Naive thymus-derived CD4-positive, alpha-beta T cell (primary cell): ENCODE measurements at regions of chrX and their contacts with region 1.

Region 1: DNA sequence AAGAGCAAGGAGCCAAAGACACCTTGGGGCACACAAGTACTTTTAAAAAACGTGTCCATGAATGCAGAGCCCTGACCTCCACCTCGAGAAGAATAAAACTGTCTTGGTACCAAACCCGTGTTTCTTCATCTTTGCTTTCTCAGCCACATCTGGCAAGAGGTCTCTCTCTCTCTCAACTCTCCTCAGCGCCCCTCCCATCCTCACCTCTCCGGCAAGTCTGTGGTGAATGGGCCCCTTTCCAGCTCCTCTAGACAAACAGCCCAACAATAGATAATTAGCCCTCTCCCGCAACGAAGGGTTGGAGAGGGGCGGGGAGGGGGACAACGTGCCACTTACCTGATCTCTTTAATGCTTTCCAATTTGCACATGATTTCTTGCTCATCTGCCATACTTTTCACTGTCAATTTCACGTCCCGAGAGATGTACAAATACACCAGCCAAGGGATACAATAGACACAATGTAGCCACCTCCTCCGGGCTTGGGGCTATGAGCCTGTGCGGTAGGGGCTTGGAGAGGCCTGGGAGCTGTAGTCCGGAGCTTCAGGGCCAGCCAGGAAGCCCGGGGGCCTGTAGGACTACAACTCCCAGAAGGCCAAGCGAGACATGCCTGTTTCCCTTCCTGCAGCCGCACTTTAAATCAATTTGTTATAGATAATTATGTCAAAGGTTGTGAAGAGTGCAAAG is at the start of gene ZC4H2:
- DNase-seq: peak; percentile 17 to 73 (median 58)
- ATAC-seq: peak; percentile 96
- H3K4me3 ChIP-seq: peak within 1 kb of the TSS; percentile 62
- H3K4me3 Mint-ChIP-seq: peak within 1 kb of the TSS; percentile 87 to 99 (median 96)
- H3K27ac ChIP-seq: peak within 1 kb of the TSS; percentile 60
- H3K27ac Mint-ChIP-seq: peak within 1 kb of the TSS; percentile 58 to 92 (median 88)
- H3K4me1 ChIP-seq: peaks cover 3 to 11% of the 10 kb centered on the region in 2 donors
- H3K4me1 Mint-ChIP-seq: peaks cover 2 to 37% (median 28%) of the 10 kb centered on the region in 7 donors
- H3K27me3 ChIP-seq: no peaks in the 10 kb centered on the region
- H3K27me3 Mint-ChIP-seq: no peaks in the 10 kb centered on the region
- total RNA-seq, gene ZC4H2: 11.5 to 22.9 (median 12.9) TPM

Region 2: GRCh38 chrX:63560601-63561218 is 1415.4 kb before region 1 on chrX:
- CTCF ChIA-PET with region 1: no interaction called
- POLR2A ChIA-PET with region 1: no interaction called
- intact Hi-C with region 1: loop called in 1 of 2 experiments (anchors 5 kb)
- DNase-seq: peak; percentile 7 to 71 (median 63)
- ATAC-seq: peak; percentile 89
- H3K4me3 ChIP-seq: peak overlapping the region; percentile 87
- H3K4me3 Mint-ChIP-seq: peak overlapping the region; percentile 93 to 100 (median 96)
- H3K27ac ChIP-seq: peak overlapping the region; percentile 59
- H3K27ac Mint-ChIP-seq: peak overlapping the region; percentile 86 to 97 (median 92)
- H3K4me1 ChIP-seq: peaks cover 0 to 4% of the 10 kb centered on the region in 2 donors
- H3K4me1 Mint-ChIP-seq: peaks cover 3 to 34% (median 20%) of the 10 kb centered on the region in 7 donors
- H3K27me3 ChIP-seq: no peaks in the 10 kb centered on the region
- H3K27me3 Mint-ChIP-seq: no peaks in the 10 kb centered on the region

Region 3: DNA sequence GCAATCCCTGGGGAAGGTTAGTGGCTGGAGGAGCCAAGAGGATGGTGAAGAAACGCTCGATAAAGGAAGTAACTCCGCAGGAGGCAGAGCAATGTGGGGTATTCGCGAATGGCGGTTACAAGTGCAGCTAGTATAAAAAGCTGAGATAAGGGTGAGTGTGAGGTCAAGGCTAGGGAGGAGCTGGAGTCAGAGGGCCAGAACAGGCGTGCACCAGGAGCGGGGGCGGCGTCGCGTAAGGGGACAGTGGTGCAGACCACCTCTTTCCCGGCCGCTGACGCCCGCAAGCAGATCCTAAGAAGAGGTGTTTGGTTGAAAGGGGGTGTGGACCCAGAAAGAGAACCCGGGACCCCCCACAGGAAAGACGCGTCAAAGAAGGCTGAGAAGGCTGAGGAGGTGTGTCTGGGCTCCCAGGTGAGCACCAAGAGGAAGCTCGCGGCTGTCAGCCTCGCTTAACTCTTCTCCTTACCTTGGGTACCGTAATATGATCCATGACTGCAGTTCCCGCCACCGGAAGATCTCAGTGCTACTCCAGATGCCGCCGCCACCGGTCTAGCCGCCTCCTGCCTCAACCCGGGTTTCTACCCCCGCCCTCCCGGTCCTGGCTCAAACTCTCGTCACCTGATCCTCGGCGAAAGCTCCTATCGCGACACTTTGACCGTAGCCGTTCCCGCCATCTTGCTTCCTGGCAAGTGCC is 581.1 kb before region 1 on chrX and contains the start of gene MTMR8:
- CTCF ChIA-PET with region 1: no interaction called
- POLR2A ChIA-PET with region 1: no interaction called
- intact Hi-C with region 1: loop called (anchors 1 to 2 kb)
- DNase-seq: peak; percentile 58 to 83 (median 78)
- ATAC-seq: peak; percentile 94
- H3K4me3 ChIP-seq: peak within 1 kb of the TSS; percentile 66
- H3K4me3 Mint-ChIP-seq: peak within 1 kb of the TSS; percentile 89 to 98 (median 94)
- H3K27ac ChIP-seq: peak within 1 kb of the TSS; percentile 66
- H3K27ac Mint-ChIP-seq: peak within 1 kb of the TSS; percentile 83 to 94 (median 91)
- H3K4me1 ChIP-seq: no peaks in the 10 kb centered on the region
- H3K4me1 Mint-ChIP-seq: peaks cover 15 to 54% (median 45%) of the 10 kb centered on the region in 7 donors
- H3K27me3 ChIP-seq: no peaks in the 10 kb centered on the region
- H3K27me3 Mint-ChIP-seq: no peaks in the 10 kb centered on the region
- total RNA-seq, gene MTMR8: 4.7 to 9.4 (median 7.2) TPM

Region 4: DNA sequence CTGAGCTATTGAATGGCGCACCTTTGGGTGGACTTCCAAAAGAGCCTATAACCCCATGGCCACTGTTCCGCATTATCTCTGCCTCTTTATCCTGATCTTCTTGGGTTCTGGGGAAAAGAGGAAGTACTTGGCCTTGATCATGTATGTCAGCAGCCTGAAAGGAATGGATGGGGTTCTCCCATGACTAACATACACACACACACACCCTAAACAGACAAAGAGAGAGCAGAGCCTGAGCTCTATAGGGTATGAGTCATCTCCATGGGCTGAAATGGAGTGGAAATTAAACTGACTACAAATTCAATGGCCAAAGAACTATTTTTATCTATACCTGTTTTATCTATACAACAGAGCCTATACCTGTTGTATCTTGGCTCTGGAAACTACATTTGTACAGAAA is 439.4 kb before region 1 on chrX:
- CTCF ChIA-PET with region 1: no interaction called
- POLR2A ChIA-PET with region 1: no interaction called
- intact Hi-C with region 1: no loop called
- DNase-seq: no peak
- ATAC-seq: no peak
- H3K4me3 ChIP-seq: no peak overlapping the region
- H3K4me3 Mint-ChIP-seq: no peak overlapping the region
- H3K27ac ChIP-seq: no peak overlapping the region
- H3K27ac Mint-ChIP-seq: no peak overlapping the region
- H3K4me1 ChIP-seq: no peaks in the 10 kb centered on the region
- H3K4me1 Mint-ChIP-seq: no peaks in the 10 kb centered on the region
- H3K27me3 ChIP-seq: no peaks in the 10 kb centered on the region
- H3K27me3 Mint-ChIP-seq: no peaks in the 10 kb centered on the region

Region 5: GRCh38 chrX:64994131-64994798 is 18.1 kb after region 1 on chrX:
- CTCF ChIA-PET with region 1: no interaction called
- POLR2A ChIA-PET with region 1: no interaction called
- intact Hi-C with region 1: no loop called
- DNase-seq: no peak
- ATAC-seq: no peak
- H3K4me3 ChIP-seq: no peak overlapping the region
- H3K4me3 Mint-ChIP-seq: no peak overlapping the region
- H3K27ac ChIP-seq: no peak overlapping the region
- H3K27ac Mint-ChIP-seq: no peak overlapping the region
- H3K4me1 ChIP-seq: no peaks in the 10 kb centered on the region
- H3K4me1 Mint-ChIP-seq: peaks cover 0 to 5% (median 0%) of the 10 kb centered on the region in 7 donors
- H3K27me3 ChIP-seq: no peaks in the 10 kb centered on the region
- H3K27me3 Mint-ChIP-seq: no peaks in the 10 kb centered on the region

Region 6: DNA sequence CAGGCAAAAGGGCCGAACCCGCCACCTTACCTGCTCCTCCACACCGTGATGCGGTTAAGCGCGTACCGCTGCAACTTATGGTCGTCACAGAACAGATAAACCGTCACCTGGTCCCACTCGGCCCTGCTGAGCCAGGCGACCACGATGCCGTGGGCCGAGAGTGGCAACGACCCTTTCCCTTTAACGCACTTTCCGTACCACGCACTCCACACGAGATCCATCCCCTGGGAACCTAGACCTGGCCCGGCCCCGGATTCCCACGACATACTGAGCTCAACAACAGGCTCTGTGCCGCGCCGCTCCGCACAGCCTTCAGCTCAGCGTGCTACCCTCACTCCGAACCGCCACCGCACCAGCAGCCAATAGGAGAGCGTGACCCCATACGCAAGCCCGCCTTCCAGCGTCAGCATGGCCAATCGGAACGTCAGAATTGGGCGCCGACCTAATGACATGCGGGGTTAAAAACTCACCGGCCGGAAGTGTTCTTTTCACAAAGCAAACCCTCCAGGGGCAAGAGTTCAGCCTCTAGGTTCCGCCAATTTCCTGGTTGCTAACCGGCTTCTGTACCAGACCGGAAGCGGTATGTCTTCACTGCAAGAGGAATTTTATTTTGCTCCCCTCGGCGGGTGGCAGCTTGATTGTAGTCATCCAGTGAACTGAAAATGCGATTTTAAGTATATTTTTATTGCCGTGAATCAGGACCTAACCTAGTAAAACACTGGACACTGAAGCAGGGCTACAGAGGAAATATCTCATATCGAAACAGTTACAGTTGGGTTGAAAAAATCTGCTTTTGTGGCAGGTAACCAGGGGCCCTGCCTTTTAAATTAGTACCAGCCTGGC is 558.5 kb after region 1 on chrX and contains the start of gene LAS1L:
- CTCF ChIA-PET with region 1: no interaction called
- POLR2A ChIA-PET with region 1: interaction called, 3 read pairs
- intact Hi-C with region 1: loop called (anchors 1 kb)
- DNase-seq: peak; percentile 71 to 94 (median 90)
- ATAC-seq: peak; percentile 99
- H3K4me3 ChIP-seq: peak within 1 kb of the TSS; percentile 96
- H3K4me3 Mint-ChIP-seq: peak within 1 kb of the TSS; percentile 97 to 100 (median 100)
- H3K27ac ChIP-seq: peak within 1 kb of the TSS; percentile 75
- H3K27ac Mint-ChIP-seq: peak within 1 kb of the TSS; percentile 94 to 100 (median 98)
- H3K4me1 ChIP-seq: peaks cover 10 to 13% of the 10 kb centered on the region in 2 donors
- H3K4me1 Mint-ChIP-seq: peaks cover 5 to 28% (median 16%) of the 10 kb centered on the region in 7 donors
- H3K27me3 ChIP-seq: no peaks in the 10 kb centered on the region
- H3K27me3 Mint-ChIP-seq: no peaks in the 10 kb centered on the region
- total RNA-seq, gene LAS1L: 37.2 to 48.9 (median 44.9) TPM

Region 7: GRCh38 chrX:66728818-66729271 is 1752.7 kb after region 1 on chrX:
- CTCF ChIA-PET with region 1: no interaction called
- POLR2A ChIA-PET with region 1: no interaction called
- intact Hi-C with region 1: loop called in 1 of 2 experiments (anchors 5 kb)
- DNase-seq: peak; percentile 25 to 75 (median 68)
- ATAC-seq: peak; percentile 91
- H3K4me3 ChIP-seq: peak overlapping the region; percentile 82
- H3K4me3 Mint-ChIP-seq: peak overlapping the region; percentile 70 to 96 (median 92)
- H3K27ac ChIP-seq: peak overlapping the region; percentile 67
- H3K27ac Mint-ChIP-seq: peak overlapping the region; percentile 85 to 100 (median 97)
- H3K4me1 ChIP-seq: no peaks in the 10 kb centered on the region
- H3K4me1 Mint-ChIP-seq: peaks cover 0 to 8% (median 0%) of the 10 kb centered on the region in 7 donors
- H3K27me3 ChIP-seq: no peaks in the 10 kb centered on the region
- H3K27me3 Mint-ChIP-seq: no peaks in the 10 kb centered on the region